ENCODE measurements at regions of chr3 and their contacts with region 1.

Region 1: DNA sequence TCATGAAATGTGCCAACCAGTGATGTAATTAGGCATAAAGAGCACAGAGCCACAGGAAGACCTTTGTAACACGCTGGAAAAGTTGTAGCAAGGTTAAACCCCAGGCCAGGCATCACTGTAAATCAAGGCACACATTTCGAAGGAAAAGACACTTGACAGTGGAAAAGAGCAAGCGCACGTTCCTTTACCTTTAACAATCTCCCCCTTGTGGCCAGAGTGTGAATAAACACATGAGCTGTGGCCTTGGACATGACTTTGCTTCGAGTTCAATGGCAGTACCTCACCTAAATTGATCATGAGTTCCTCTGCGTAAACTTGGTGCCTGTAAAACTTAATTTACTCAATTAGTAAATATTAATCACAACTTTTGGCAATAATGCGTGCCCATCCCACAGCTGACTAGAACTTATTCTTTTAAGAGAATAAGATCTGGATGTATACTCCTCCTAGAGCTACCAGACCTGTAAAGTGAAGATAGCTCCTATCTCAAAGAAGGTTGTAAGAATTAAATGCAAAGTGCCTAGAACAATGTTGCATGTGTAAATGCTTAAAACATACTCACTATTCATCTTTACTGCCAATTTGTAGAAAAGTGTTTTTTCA is 757.0 kb upstream of the NECTIN3 start:
- DNase-seq: peak; percentile 64
- ATAC-seq: peak; percentile 65
- H3K4me3 Mint-ChIP-seq: no peak overlapping the region
- H3K27ac Mint-ChIP-seq: no peak overlapping the region
- H3K4me1 Mint-ChIP-seq: no peaks in the 10 kb centered on the region
- H3K27me3 Mint-ChIP-seq: peaks cover 4% of the 10 kb centered on the region

Region 2: GRCh38 chr3:109532257-109533216 is 782.1 kb before region 1 on chr3:
- CTCF ChIA-PET with region 1: interaction called, 13 read pairs
- DNase-seq: peak; percentile 62
- ATAC-seq: peak; percentile 63
- H3K4me3 Mint-ChIP-seq: no peak overlapping the region
- H3K27ac Mint-ChIP-seq: no peak overlapping the region
- H3K4me1 Mint-ChIP-seq: no peaks in the 10 kb centered on the region
- H3K27me3 Mint-ChIP-seq: peaks cover 4% of the 10 kb centered on the region

Region 3: GRCh38 chr3:110327870-110328269 is 13.3 kb after region 1 on chr3:
- CTCF ChIA-PET with region 1: interaction called, 10 read pairs
- DNase-seq: no peak
- ATAC-seq: no peak
- H3K4me3 Mint-ChIP-seq: no peak overlapping the region
- H3K27ac Mint-ChIP-seq: no peak overlapping the region
- H3K4me1 Mint-ChIP-seq: no peaks in the 10 kb centered on the region
- H3K27me3 Mint-ChIP-seq: no peaks in the 10 kb centered on the region

Region 4: GRCh38 chr3:110470310-110470709 is 155.7 kb after region 1 on chr3:
- CTCF ChIA-PET with region 1: no interaction called
- DNase-seq: no peak
- ATAC-seq: no peak
- H3K4me3 Mint-ChIP-seq: no peak overlapping the region
- H3K27ac Mint-ChIP-seq: no peak overlapping the region
- H3K4me1 Mint-ChIP-seq: no peaks in the 10 kb centered on the region
- H3K27me3 Mint-ChIP-seq: peaks cover 11% of the 10 kb centered on the region

Measured in activated CD8-positive, alpha-beta memory T cell treated with anti-CD3 and anti-CD28 coated beads, Interleukin-2, amount 10 ng/mL, durations not matched to agents 7 days and 5 days (primary cell).